ENCODE measurements at regions of chr1 and their contacts with region 1.

Region 1: DNA sequence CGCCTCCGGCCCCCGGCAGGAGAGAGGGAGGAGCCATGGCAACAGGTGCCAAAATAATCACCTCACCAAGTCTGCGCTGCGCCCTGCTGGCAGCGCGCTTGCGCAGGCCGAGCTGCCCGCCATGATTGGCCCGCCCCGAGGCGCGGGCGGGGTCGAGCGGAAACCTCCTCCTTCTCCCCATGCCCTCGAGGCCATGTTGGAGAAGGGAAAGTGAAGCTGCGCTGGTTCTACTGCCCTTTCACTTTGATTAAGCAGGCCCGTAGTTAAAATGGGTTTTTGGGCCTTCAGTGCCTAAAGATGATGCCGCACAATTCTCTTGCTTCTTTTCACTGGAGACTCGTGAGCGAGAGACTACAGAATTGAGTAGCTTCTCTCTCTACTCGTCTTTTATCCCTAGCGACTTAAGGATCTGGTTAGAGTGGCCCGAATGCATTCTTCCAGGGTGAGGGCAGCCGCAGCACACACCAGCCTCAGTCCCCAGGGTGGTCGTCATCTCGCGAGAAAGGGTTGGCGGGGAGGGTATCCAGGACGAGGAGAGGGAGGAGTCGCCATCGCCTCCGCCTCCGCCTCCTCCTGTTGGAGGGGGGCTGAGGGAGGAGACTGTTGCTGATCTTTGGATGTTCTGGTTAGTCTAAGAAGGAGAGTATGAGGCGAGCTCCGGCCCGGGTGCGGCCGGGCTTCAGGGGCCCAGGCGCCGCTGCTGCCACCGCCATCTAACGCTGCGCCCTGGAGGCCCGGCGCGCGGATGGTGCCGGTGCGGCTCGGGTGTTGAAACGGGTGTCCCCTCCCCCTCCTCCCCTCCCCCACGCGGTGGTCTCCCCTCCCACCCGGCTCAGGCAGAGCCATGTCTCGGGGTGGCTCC is at the start of gene DCAF6:
- DNase-seq: peak; percentile 98 to 99 (median 98)
- ATAC-seq: peak; percentile 76
- H3K4me3 ChIP-seq: peak within 1 kb of the TSS; percentile 81
- H3K27ac ChIP-seq: peak within 1 kb of the TSS; percentile 98
- H3K4me1 ChIP-seq: peaks cover 8 to 15% of the 10 kb centered on the region in 2 experiments; a peak in 4 of 5 replicates
- H3K27me3 ChIP-seq: no peaks in the 10 kb centered on the region
- CTCF ChIP-seq: no peak; a peak in 1 of 6 replicates
- EP300 ChIP-seq: peak; percentile 27
- POLR2A ChIP-seq: peak; percentile 89
- RAD21 ChIP-seq: no peak
- polyA plus RNA-seq, gene DCAF6: 19.1 to 24.5 TPM

Region 2: DNA sequence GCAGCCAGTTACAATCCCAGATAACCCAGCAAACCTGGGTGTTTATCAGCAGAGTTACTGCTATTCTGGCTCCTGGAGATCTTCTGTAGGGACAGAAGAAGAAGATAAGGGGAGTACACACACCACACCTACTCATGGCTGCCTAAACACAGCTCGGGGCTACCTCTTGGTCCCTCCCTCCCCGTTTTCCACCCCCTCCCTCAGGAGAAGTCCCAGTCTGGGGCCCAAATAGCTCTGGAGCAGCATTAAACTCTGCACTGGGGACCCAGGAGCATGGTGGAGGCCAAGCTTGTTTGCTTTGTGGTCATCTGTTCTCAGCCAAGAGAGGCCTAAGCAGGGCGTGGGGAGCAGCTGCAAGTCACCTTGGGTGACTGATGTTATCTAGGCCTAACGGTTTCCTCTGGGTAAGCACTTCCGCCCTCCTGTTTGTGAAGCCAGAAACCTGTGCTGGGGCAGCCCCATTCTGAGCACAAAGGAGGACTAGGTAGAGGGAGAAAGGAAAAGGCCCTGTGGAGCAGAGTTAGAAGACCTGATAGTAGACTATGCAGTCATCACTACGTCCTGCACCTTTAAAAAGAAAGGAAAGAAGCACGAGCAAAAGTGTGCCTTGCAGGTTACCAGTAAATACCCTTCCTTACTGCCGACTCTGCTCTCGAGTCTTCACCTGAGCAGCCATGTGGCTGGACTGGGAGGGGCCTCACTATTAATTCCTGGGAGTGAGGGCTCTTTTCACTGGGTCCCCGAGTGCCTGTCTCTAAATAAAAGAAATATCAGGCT is 308.2 kb before region 1 on chr1:
- CTCF ChIA-PET with region 1: no interaction called
- POLR2A ChIA-PET with region 1: no interaction called
- in situ Hi-C with region 1: no loop called
- intact Hi-C with region 1: loop called (anchors 10 kb)
- DNase-seq: peak; percentile 92 to 98 (median 92)
- ATAC-seq: peak; percentile 80
- H3K4me3 ChIP-seq: peak overlapping the region; percentile 77
- H3K27ac ChIP-seq: peak overlapping the region; percentile 97
- H3K4me1 ChIP-seq: peaks cover 36 to 55% of the 10 kb centered on the region in 2 experiments
- H3K27me3 ChIP-seq: no peaks in the 10 kb centered on the region
- CTCF ChIP-seq: no peak
- EP300 ChIP-seq: peak; percentile 98
- POLR2A ChIP-seq: peak; percentile 96
- RAD21 ChIP-seq: peak in 1 of 2 experiments; percentile 19; a peak in 2 of 4 replicates

Region 3: DNA sequence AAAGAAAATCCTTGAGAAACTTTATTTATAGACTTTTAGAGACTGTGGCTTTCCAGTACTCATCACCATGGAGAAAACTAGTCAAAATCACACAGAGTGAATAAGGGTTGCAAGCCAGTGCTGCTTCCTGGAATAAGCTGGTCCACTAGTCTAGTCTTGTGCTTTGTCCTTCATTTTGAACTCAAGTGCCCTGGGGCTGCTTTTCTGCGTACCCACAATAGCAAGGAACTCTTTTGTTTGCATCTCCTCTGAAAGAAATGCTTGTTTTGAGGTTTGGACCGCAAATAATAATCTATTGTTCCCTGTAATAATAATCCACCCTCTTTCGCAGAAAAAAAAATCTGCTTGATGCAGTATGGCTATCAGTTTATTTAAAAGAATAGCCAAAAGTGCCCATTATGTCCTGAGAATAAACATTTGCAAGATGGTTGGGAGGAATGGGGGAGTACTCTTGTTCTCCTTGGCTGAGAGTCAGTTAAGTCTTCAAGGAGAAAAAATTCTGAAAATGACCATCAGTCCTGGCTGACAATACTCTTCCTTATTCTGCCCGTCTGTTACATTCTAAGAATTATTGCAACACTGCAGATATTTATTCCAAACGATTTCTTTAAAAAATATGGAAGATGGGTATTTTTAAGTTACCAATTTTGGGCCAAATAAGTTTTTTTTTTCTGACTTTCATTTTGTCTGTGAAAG is 172.6 kb before region 1 on chr1:
- CTCF ChIA-PET with region 1: no interaction called
- POLR2A ChIA-PET with region 1: interaction called, 4 read pairs
- in situ Hi-C with region 1: no loop called
- intact Hi-C with region 1: loop called (anchors 5 kb)
- DNase-seq: no peak
- ATAC-seq: no peak
- H3K4me3 ChIP-seq: no peak overlapping the region
- H3K27ac ChIP-seq: no peak overlapping the region
- H3K4me1 ChIP-seq: peaks cover 11 to 54% of the 10 kb centered on the region in 2 experiments
- H3K27me3 ChIP-seq: no peaks in the 10 kb centered on the region
- CTCF ChIP-seq: no peak
- EP300 ChIP-seq: no peak
- POLR2A ChIP-seq: no peak
- RAD21 ChIP-seq: no peak

Region 4: GRCh38 chr1:167849666-167850065 is 86.6 kb before region 1 on chr1:
- CTCF ChIA-PET with region 1: no interaction called
- POLR2A ChIA-PET with region 1: no interaction called
- in situ Hi-C with region 1: no loop called
- intact Hi-C with region 1: no loop called
- DNase-seq: no peak
- ATAC-seq: no peak
- H3K4me3 ChIP-seq: no peak overlapping the region
- H3K27ac ChIP-seq: no peak overlapping the region
- H3K4me1 ChIP-seq: no peaks in the 10 kb centered on the region
- H3K27me3 ChIP-seq: no peaks in the 10 kb centered on the region
- CTCF ChIP-seq: no peak
- EP300 ChIP-seq: no peak
- POLR2A ChIP-seq: no peak
- RAD21 ChIP-seq: no peak

Region 5: GRCh38 chr1:167862432-167863076 is 73.7 kb before region 1 on chr1:
- CTCF ChIA-PET with region 1: no interaction called
- POLR2A ChIA-PET with region 1: interaction called, 4 read pairs
- in situ Hi-C with region 1: no loop called
- intact Hi-C with region 1: loop called (anchors 2 kb)
- DNase-seq: peak in 1 of 4 experiments; percentile 45
- ATAC-seq: peak; percentile 10
- H3K4me3 ChIP-seq: no peak overlapping the region
- H3K27ac ChIP-seq: peak overlapping the region; percentile 64; the same call in 1 of the 3 replicates
- H3K4me1 ChIP-seq: peaks cover 21 to 44% of the 10 kb centered on the region in 2 experiments; a peak in 4 of 5 replicates
- H3K27me3 ChIP-seq: no peaks in the 10 kb centered on the region
- CTCF ChIP-seq: no peak
- EP300 ChIP-seq: no peak; the same call in 1 of the 2 replicates
- POLR2A ChIP-seq: no peak
- RAD21 ChIP-seq: no peak

Region 6: GRCh38 chr1:167950569-167950968 is 14.3 kb after region 1 on chr1:
- CTCF ChIA-PET with region 1: no interaction called
- POLR2A ChIA-PET with region 1: interaction called, 16 read pairs
- in situ Hi-C with region 1: no loop called
- intact Hi-C with region 1: no loop called
- DNase-seq: no peak
- ATAC-seq: no peak
- H3K4me3 ChIP-seq: no peak overlapping the region
- H3K27ac ChIP-seq: no peak overlapping the region
- H3K4me1 ChIP-seq: peaks cover 0 to 6% of the 10 kb centered on the region in 2 experiments; a peak in 1 of 5 replicates
- H3K27me3 ChIP-seq: no peaks in the 10 kb centered on the region
- CTCF ChIP-seq: no peak
- EP300 ChIP-seq: no peak
- POLR2A ChIP-seq: no peak
- RAD21 ChIP-seq: no peak

Region 7: DNA sequence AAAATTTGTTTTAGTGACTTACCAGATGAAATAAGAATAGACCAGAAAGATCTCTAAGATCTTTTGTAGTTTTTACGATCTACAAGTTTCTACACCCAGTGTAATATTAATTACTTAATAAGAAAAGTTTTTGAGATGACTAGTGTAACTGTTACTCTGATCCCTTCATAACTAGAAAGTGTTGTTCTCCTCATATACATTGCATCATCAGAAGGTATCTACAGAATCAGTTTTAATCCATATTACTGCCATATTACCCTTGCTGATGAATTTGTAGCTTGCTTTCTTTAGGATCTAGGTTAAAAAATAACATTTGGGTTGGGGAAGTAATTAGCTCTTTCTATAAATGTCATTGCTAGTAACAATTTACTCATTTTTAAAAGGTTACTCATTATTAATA is 127.9 kb after region 1 on chr1:
- CTCF ChIA-PET with region 1: interaction called, 3 read pairs
- POLR2A ChIA-PET with region 1: interaction called, 3 read pairs
- in situ Hi-C with region 1: no loop called
- intact Hi-C with region 1: loop called (anchors 5 kb)
- DNase-seq: no peak
- ATAC-seq: no peak
- H3K4me3 ChIP-seq: no peak overlapping the region
- H3K27ac ChIP-seq: no peak overlapping the region
- H3K4me1 ChIP-seq: no peaks in the 10 kb centered on the region
- H3K27me3 ChIP-seq: no peaks in the 10 kb centered on the region
- CTCF ChIP-seq: no peak
- EP300 ChIP-seq: no peak
- POLR2A ChIP-seq: no peak
- RAD21 ChIP-seq: no peak